RWPE1 (cell line): ENCODE measurements at regions of chr9 and their contacts with region 1.

Region 1: DNA sequence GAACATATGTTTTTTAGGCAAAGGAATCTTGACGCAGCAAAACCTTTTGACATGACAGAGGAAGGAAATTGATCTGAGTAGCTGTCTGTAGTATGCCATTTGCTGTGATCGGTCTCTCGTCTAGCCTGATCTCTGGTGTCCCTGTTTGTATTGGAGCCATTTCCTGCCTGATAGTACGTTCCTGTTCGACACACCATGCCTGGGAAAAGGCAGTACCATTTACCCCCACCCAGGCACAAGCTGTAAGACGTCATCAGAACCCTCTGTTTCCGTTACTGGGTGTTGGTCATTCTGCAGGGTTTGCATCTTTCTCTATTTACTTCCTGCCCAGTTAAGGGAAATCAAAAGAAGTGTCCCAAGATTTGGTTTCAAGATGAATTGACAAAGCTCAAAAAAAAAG is 129.7 kb downstream of the CEMIP2 start:
- DNase-seq: no peak
- H3K27ac ChIP-seq: no peak overlapping the region
- CTCF ChIP-seq: no peak

Region 2: DNA sequence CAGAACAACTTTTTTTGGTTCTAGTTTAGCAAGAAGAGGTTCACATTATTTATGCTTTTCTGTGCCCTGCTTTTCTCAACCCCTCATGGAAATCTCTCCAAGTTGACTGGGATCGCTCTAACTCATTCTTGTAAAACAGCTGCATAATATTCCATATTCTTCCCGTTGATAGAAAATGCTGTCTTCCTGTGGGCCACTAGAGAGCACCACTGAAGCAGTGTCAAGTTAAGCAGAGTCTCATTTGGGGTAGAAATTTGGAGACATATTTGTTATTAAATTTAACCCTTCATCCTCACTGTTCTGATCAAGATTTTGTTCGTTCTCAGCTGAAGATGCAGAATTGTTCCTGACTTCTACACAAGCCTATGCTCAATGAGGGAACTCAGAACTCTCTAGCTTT is 10.4 kb before region 1 on chr9:
- CTCF ChIA-PET with region 1: interaction called, 14 read pairs
- POLR2A ChIA-PET with region 1: interaction called, 8 read pairs
- DNase-seq: no peak
- H3K27ac ChIP-seq: no peak overlapping the region
- CTCF ChIP-seq: 0 out of 2 replicates have a peak, but pooled peaks have one; percentile 17

Region 3: GRCh38 chr9:71703172-71703872 is 64.7 kb after region 1 on chr9:
- CTCF ChIA-PET with region 1: no interaction called
- POLR2A ChIA-PET with region 1: no interaction called
- DNase-seq: peak; percentile 24
- H3K27ac ChIP-seq: no peak overlapping the region
- CTCF ChIP-seq: no peak